SK-N-SH (cell line): ENCODE measurements at regions of chr6 and their contacts with region 1.

Region 1: GRCh38 chr6:37018198-37019064 is 13.0 kb downstream of the FGD2 start:
- DNase-seq: peak; percentile 89
- H3K4me3 ChIP-seq: no peak overlapping the region; a peak in 1 of 4 replicates
- H3K27ac ChIP-seq: peak overlapping the region in 1 of 2 experiments; percentile 59; a peak in 3 of 4 replicates
- H3K4me1 ChIP-seq: peaks cover 0 to 19% of the 10 kb centered on the region in 2 experiments; a peak in 1 of 4 replicates
- H3K27me3 ChIP-seq: no peaks in the 10 kb centered on the region
- CTCF ChIP-seq: peak; percentile 92
- EP300 ChIP-seq: peak in 1 of 2 experiments; percentile 11; a peak in 1 of 4 replicates
- RAD21 ChIP-seq: peak; percentile 94

Region 2: DNA sequence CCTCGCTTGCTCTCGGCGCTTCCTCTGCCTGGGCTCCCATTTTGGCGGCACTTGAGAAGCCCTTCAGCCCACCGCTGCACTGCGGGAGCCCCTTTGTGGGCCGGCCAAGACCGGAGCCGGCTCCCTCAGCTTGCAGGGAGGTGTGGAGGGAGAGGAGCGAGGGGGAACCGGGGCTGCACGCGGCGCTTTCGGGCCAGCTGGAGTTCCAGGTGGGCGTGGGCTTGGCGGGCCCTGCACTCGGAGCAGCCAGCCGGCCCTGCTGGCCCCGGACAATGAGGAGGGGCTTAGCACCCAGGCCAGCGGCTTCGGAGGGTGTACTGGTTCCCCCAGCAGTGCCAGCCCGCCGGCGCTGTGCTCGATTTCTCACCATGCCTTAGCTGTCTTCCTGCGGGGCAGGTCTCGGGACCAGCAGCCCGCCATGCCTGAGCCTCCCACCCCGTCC is 1087.3 kb before region 1 on chr6:
- CTCF ChIA-PET with region 1: no interaction called
- POLR2A ChIA-PET with region 1: no interaction called
- DNase-seq: no peak
- H3K4me3 ChIP-seq: no peak overlapping the region
- H3K27ac ChIP-seq: no peak overlapping the region
- H3K4me1 ChIP-seq: no peaks in the 10 kb centered on the region
- H3K27me3 ChIP-seq: no peaks in the 10 kb centered on the region
- CTCF ChIP-seq: no peak
- EP300 ChIP-seq: no peak
- RAD21 ChIP-seq: no peak

Region 3: DNA sequence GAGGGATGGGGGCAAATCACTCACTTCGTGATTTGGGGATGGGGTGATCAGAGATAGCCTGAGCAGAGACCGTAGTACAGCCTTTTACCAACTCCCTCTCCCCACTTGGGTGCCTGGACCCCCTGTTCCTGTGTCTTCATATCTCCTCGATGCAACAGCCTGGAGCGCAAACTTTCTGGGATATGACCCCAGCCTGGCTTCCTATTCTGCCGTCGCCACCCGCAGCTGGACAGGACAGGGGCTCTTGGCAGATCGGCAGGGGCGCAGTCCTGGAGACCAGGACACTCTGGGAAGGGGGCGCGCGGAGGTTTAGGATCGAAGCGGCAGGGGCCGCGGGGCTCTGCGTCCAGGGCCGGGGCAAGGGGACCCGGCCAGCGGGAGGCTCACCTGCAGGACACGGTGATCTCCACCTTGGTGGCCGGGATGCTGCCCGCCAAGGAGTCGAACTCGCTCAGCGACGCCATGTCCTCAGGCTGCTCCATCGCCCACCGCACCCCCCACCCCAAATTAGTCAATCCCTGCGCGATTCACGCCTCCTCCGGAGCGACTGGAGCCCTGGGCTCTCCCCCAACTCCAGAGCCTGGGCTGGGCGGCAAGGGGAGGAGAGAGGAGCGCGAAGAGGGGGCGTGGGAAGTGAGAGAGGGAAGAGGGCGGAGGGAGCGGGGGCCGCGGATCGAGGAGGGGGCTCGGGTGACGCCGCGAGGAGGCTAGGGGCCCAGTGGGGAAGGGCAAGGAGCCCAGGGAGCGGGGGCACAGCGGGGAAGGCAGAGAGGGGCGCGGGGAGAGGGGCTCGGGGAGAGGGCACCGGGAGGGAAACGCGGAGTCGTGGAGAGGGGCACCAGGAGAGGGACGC is 179.3 kb before region 1 on chr6 and contains the start of gene CPNE5:
- CTCF ChIA-PET with region 1: no interaction called
- POLR2A ChIA-PET with region 1: no interaction called
- DNase-seq: peak; percentile 82
- H3K4me3 ChIP-seq: peak within 1 kb of the TSS; percentile 55 to 62
- H3K27ac ChIP-seq: no peak within 1 kb of the TSS
- H3K4me1 ChIP-seq: peaks cover 0 to 10% of the 10 kb centered on the region in 2 experiments; a peak in 1 of 4 replicates
- H3K27me3 ChIP-seq: peaks cover 12% of the 10 kb centered on the region
- CTCF ChIP-seq: no peak
- EP300 ChIP-seq: no peak
- RAD21 ChIP-seq: no peak
- polyA plus RNA-seq, gene CPNE5: 0.30 and 0.47 TPM in 2 replicates

Region 4: GRCh38 chr6:36874443-36875249 is 143.8 kb before region 1 on chr6 and contains the start of gene PPIL1:
- CTCF ChIA-PET with region 1: interaction called, 46 read pairs
- POLR2A ChIA-PET with region 1: interaction called, 15 read pairs
- DNase-seq: peak; percentile 94
- H3K4me3 ChIP-seq: peak within 1 kb of the TSS; percentile 76 to 87
- H3K27ac ChIP-seq: peak within 1 kb of the TSS; percentile 95 to 100
- H3K4me1 ChIP-seq: peaks cover 0 to 10% of the 10 kb centered on the region in 2 experiments; a peak in 2 of 4 replicates
- H3K27me3 ChIP-seq: no peaks in the 10 kb centered on the region
- CTCF ChIP-seq: no peak
- EP300 ChIP-seq: peak in 1 of 2 experiments; percentile 6; a peak in 2 of 4 replicates
- RAD21 ChIP-seq: no peak
- polyA plus RNA-seq, gene PPIL1: 36.6 and 48.4 TPM in 2 replicates

Region 5: DNA sequence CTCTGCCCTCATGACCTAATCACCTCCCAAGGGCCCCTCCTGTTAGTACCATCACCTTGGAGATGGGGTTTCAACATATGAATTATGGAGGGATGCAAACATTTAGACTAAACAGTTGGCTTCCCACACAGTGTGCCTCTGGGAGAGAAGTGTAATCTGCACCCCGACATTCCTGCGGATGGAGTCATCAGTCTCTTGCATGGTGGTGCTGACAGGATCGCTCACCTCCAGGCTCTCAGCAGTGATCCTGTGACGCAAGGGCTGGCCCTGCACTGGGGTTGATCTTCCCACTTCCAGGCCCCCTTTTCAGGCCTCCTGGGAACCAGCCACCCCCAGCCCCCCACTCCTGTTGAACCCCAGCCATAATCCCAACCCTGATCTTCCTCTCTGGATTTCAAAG is 79.9 kb before region 1 on chr6:
- CTCF ChIA-PET with region 1: interaction called, 15 read pairs
- POLR2A ChIA-PET with region 1: no interaction called
- DNase-seq: no peak
- H3K4me3 ChIP-seq: no peak overlapping the region
- H3K27ac ChIP-seq: no peak overlapping the region
- H3K4me1 ChIP-seq: peaks cover 0 to 8% of the 10 kb centered on the region in 2 experiments; a peak in 1 of 4 replicates
- H3K27me3 ChIP-seq: no peaks in the 10 kb centered on the region
- CTCF ChIP-seq: no peak
- EP300 ChIP-seq: no peak
- RAD21 ChIP-seq: no peak

Region 6: GRCh38 chr6:36985808-36986703 is 32.4 kb before region 1 on chr6 and contains the start of gene MTCH1:
- CTCF ChIA-PET with region 1: interaction called, 54 read pairs
- POLR2A ChIA-PET with region 1: interaction called, 16 read pairs
- DNase-seq: peak; percentile 98
- H3K4me3 ChIP-seq: peak within 1 kb of the TSS; percentile 93 to 95
- H3K27ac ChIP-seq: peak within 1 kb of the TSS; percentile 64 to 93
- H3K4me1 ChIP-seq: peaks cover 0 to 21% of the 10 kb centered on the region in 2 experiments; a peak in 2 of 4 replicates
- H3K27me3 ChIP-seq: no peaks in the 10 kb centered on the region; the same call in 1 of the 2 replicates
- CTCF ChIP-seq: no peak
- EP300 ChIP-seq: peak in 1 of 2 experiments; percentile 57; a peak in 1 of 4 replicates
- RAD21 ChIP-seq: no peak
- polyA plus RNA-seq, gene MTCH1: 137 and 151 TPM in 2 replicates

Region 7: GRCh38 chr6:37169496-37170272 is 151.3 kb after region 1 on chr6 and contains the start of gene PIM1:
- CTCF ChIA-PET with region 1: interaction called, 418 read pairs
- POLR2A ChIA-PET with region 1: interaction called, 3 read pairs
- DNase-seq: peak; percentile 99
- H3K4me3 ChIP-seq: peak within 1 kb of the TSS; percentile 89 to 93
- H3K27ac ChIP-seq: peak within 1 kb of the TSS; percentile 88 to 95
- H3K4me1 ChIP-seq: peaks cover 4 to 19% of the 10 kb centered on the region in 2 experiments; a peak in 3 of 4 replicates
- H3K27me3 ChIP-seq: no peaks in the 10 kb centered on the region
- CTCF ChIP-seq: no peak
- EP300 ChIP-seq: peak in 1 of 2 experiments; percentile 31; a peak in 1 of 4 replicates
- RAD21 ChIP-seq: no peak
- polyA plus RNA-seq, gene PIM1: 33.9 and 35.3 TPM in 2 replicates

Region 8: DNA sequence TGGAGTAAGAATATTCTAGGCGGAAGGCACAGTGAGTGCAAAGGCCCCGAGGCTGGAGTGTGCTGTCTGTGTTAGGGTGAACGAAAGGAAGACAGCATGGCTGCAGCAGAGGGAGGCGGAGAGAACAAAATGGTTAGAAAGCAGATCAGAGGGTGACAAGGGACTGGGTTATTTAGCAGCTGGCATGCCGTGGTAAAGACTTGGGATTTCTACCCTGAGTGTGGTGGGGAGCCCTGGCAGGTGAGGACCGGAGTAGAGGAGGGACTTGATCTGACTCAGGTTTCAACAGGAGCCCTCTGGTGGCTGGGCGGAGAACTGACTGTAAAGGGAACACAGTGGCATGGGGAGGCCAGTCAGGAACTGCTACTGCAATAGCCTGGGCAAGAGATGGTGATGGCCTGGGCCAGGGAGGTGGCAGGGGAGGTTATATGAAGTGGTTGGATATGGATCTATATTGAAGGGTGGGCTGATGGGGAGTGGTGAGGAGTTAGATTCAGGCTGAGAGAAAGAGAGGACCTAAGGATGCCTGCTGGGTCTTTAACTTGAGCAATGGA is 189.5 kb after region 1 on chr6:
- CTCF ChIA-PET with region 1: interaction called, 431 read pairs
- POLR2A ChIA-PET with region 1: interaction called, 4 read pairs
- DNase-seq: peak; percentile 61
- H3K4me3 ChIP-seq: no peak overlapping the region
- H3K27ac ChIP-seq: no peak overlapping the region
- H3K4me1 ChIP-seq: peaks cover 0 to 2% of the 10 kb centered on the region in 2 experiments; a peak in 1 of 4 replicates
- H3K27me3 ChIP-seq: no peaks in the 10 kb centered on the region
- CTCF ChIP-seq: peak; percentile 77
- EP300 ChIP-seq: no peak
- RAD21 ChIP-seq: peak; percentile 58